ENCODE measurements at regions of chr10 and their contacts with region 1.

Region 1: DNA sequence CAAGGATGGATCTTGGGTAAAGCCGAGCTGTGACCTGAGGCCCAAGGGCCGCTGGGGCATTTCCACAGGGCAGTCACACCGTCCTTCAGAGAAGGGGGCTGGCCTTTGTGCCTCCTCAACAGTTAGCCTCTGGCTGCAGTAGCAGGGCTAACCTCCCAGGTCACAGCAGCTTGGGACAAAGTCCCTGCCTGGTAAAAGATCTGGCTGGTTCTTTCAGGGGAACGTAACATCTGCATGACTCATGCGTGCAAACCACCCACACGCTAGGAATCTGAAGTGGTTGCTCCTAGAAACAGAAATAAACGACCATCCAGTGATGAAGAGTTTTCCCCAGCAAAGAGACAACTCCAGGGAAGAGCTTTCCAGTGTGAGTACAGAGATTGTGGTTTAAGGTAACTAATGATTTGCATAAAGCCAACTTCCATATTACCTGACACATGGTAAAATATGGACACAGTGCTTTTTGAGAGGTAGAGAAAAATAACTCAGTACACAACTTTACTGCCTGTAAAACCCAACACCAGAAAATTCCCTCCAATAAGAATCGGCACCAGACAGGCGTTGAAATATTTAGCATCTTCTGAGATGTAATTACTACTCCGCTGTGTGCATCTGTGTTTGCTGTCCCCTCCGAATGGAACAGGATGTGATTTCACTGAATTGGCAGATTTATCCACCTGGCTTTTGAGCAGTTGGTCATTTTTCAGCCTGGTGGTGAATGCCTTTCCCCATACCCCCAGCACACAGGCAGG is 84.9 kb upstream of the ADRB1 start:
- DNase-seq: no peak
- H3K4me3 Mint-ChIP-seq: no peak overlapping the region
- H3K27ac Mint-ChIP-seq: no peak overlapping the region
- H3K4me1 Mint-ChIP-seq: peaks cover 39% of the 10 kb centered on the region
- H3K27me3 Mint-ChIP-seq: peaks cover 18% of the 10 kb centered on the region

Region 2: GRCh38 chr10:113362645-113363433 is 596.0 kb before region 1 on chr10:
- intact Hi-C with region 1: no loop called
- DNase-seq: no peak
- H3K4me3 Mint-ChIP-seq: no peak overlapping the region
- H3K27ac Mint-ChIP-seq: no peak overlapping the region
- H3K4me1 Mint-ChIP-seq: no peaks in the 10 kb centered on the region
- H3K27me3 Mint-ChIP-seq: peaks cover 5% of the 10 kb centered on the region

Region 3: DNA sequence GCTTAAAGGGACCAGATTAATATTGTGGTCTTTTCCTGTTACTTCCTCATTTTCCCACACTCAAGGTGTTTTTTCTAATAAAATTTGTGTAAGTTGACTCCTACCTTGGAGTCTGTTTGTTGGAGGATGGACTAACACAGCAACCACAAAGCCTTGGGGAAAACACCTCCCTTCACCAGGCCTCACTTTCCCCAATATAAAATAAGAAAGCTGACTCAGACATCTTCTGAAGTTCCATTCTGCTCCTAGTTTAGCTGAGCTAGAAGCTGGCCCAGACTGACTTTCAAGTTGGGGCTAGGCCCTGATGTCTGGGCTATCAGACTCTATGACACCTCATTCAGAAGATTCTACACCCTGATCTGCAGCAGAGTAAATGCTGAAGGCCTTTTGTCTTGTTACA is 11.8 kb after region 1 on chr10:
- intact Hi-C with region 1: loop called (anchors 1 kb)
- DNase-seq: no peak
- H3K4me3 Mint-ChIP-seq: no peak overlapping the region
- H3K27ac Mint-ChIP-seq: no peak overlapping the region
- H3K4me1 Mint-ChIP-seq: peaks cover 10% of the 10 kb centered on the region
- H3K27me3 Mint-ChIP-seq: peaks cover 33% of the 10 kb centered on the region

Region 4: DNA sequence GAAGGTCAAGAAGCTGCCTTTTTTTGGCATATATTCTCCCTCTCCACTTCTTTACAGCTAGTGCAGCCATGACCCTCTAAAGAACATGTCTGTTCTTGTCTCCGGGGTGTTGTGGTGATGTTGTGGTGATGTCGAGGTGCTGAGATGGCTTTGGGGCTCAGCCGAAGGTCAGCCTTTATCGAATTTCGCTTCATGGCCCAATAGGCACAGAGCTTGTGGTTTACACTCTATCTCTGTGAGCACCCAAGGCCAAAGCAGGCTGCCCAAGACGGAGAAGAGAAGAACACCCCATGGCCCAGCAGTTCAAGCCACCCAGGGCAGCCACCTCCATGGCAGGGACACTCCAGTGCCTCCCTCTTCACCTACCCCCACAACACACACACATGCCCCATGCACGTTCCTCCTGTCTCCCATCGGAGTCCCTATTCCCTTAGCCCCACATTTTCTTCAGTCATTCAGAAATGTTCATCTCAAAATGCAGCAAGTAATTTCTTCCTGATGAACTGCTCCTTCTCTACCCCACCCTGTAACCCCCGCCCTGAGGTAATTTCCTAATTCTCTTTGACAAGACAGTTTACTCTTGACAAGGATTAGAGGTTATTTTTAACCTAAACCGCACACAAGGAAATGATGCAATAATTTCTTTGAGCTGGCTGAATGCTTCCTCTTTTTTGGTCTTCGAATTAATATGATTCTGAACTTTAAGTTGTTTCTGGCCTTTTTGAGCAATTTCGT is 66.2 kb after region 1 on chr10:
- intact Hi-C with region 1: loop called (anchors 5 kb)
- DNase-seq: no peak
- H3K4me3 Mint-ChIP-seq: peak overlapping the region; percentile 23
- H3K27ac Mint-ChIP-seq: peak overlapping the region; percentile 34
- H3K4me1 Mint-ChIP-seq: peaks cover 36% of the 10 kb centered on the region
- H3K27me3 Mint-ChIP-seq: peaks cover 21% of the 10 kb centered on the region

Region 5: DNA sequence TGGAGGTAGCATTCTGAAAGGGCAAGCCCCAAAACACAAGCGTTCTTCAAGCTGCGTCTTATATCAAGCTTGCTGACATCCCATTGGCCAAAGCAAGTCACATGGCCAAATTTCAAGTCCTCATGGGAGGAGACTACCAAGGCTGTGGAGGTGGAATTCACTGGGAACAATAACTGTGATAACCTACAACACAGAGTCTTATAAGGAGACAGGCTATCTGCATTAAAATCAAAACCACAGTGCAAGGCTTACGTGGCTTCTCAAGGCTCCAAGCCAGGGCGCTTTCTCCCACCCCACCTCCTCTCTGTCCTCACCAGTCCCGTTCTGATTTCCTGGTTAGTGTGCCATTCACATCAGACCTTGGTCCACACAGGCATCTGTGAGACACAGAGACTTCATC is 124.2 kb after region 1 on chr10:
- intact Hi-C with region 1: loop called (anchors 5 kb)
- DNase-seq: no peak
- H3K4me3 Mint-ChIP-seq: no peak overlapping the region
- H3K27ac Mint-ChIP-seq: no peak overlapping the region
- H3K4me1 Mint-ChIP-seq: no peaks in the 10 kb centered on the region
- H3K27me3 Mint-ChIP-seq: peaks cover 12% of the 10 kb centered on the region

Region 6: DNA sequence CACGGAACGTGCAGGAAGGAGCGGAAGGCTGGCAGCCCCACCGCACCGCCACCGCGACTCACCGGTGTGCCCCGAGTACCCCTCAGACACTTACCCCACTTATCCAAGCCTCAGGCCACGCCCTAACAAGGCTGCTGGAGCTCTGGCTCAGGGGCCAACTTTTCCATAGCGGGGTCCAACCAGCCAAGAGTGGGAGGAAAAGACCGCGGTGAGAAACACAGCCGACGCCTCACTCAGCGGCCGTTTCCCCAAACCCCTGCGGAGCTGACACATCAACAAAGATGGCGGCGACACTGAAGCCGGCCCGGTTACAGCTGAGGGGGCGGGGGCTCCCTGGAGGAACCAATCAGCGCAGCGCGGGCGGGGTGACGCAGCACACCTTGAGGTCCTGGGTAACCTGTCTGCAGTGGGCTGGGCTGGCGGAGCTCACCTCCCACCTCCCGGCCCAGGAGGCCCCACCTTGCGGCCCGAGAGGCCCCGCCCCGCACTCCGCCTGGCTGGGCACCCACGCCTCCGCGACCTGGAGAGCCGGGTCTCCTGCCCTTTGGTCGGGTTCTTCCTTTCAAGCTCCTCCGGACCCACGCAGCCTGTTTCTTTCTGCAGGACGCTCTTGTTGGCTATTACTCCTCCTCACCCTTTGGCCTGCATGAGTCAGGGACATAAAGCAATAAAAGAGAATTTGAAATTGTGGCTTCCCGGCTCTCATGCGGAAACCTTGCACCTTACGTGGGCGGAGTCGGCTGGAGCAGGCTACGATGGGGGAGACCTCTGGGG is 215.3 kb after region 1 on chr10 and contains the start of gene CCDC186:
- intact Hi-C with region 1: loop called (anchors 1 kb)
- DNase-seq: peak; percentile 96
- H3K4me3 Mint-ChIP-seq: peak within 1 kb of the TSS; percentile 95
- H3K27ac Mint-ChIP-seq: peak within 1 kb of the TSS; percentile 91
- H3K4me1 Mint-ChIP-seq: peaks cover 35% of the 10 kb centered on the region
- H3K27me3 Mint-ChIP-seq: peaks cover 12% of the 10 kb centered on the region
- total RNA-seq, gene CCDC186: 12.1 and 13.0 TPM in 2 replicates

Region 7: GRCh38 chr10:114801411-114801813 is 842.6 kb after region 1 on chr10:
- intact Hi-C with region 1: loop called (anchors 1 kb)
- DNase-seq: peak; percentile 43
- H3K4me3 Mint-ChIP-seq: peak overlapping the region; percentile 77
- H3K27ac Mint-ChIP-seq: peak overlapping the region; percentile 79
- H3K4me1 Mint-ChIP-seq: peaks cover 47% of the 10 kb centered on the region
- H3K27me3 Mint-ChIP-seq: no peaks in the 10 kb centered on the region